ENCODE measurements at regions of chr10 and their contacts with region 1.

Region 1: GRCh38 chr10:110918643-110919363 is at the start of gene BBIP1:
- DNase-seq: peak; percentile 99
- H3K4me3 ChIP-seq: peak within 1 kb of the TSS; percentile 86 to 92 (median 88)
- H3K27ac ChIP-seq: peak within 1 kb of the TSS; percentile 98 to 100 (median 98)
- H3K4me1 ChIP-seq: peaks cover 10 to 43% (median 26%) of the 10 kb centered on the region in 4 donors
- H3K27me3 ChIP-seq: no peaks in the 10 kb centered on the region
- CTCF ChIP-seq: peak in 3 of 5 experiments; percentile 1 to 17 (median 15)
- EP300 ChIP-seq: peak; percentile 24
- POLR2A ChIP-seq: peak; percentile 88
- total RNA-seq, gene BBIP1: 9.6 to 44.9 (median 18.1) TPM

Region 2: DNA sequence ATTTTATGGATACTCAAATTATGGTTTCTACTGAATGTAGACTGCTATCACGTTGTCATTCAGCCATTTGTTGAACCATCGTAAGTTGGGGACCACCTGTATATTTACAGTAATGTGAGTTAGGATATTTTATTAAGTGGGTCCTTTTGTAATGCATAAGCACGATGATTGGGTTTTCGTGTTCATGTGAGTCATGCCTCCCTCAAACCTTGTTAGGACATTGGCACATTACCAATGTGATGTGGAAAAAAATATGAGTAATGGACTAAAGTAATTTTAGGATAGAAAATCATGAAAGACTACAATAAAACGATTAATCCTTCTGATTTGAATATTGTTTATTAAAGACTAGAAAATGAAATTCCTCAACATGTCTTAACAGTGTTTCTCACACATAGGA is 342.6 kb before region 1 on chr10:
- in situ Hi-C with region 1: loop called in 1 of 4 experiments (anchors 25 kb)
- intact Hi-C with region 1: no loop called
- DNase-seq: no peak
- H3K4me3 ChIP-seq: no peak overlapping the region
- H3K27ac ChIP-seq: no peak overlapping the region
- H3K4me1 ChIP-seq: peaks cover 0 to 21% (median 0%) of the 10 kb centered on the region in 4 donors
- H3K27me3 ChIP-seq: no peaks in the 10 kb centered on the region
- CTCF ChIP-seq: no peak
- EP300 ChIP-seq: no peak
- POLR2A ChIP-seq: no peak

Region 3: GRCh38 chr10:110610308-110610774 is 308.5 kb before region 1 on chr10:
- in situ Hi-C with region 1: loop called in 1 of 4 experiments (anchors 25 kb)
- intact Hi-C with region 1: no loop called
- DNase-seq: peak; percentile 45
- H3K4me3 ChIP-seq: no peak overlapping the region
- H3K27ac ChIP-seq: no peak overlapping the region
- H3K4me1 ChIP-seq: no peaks in the 10 kb centered on the region
- H3K27me3 ChIP-seq: no peaks in the 10 kb centered on the region
- CTCF ChIP-seq: peak; percentile 69 to 83 (median 78)
- EP300 ChIP-seq: no peak
- POLR2A ChIP-seq: no peak

Region 4: GRCh38 chr10:110834629-110835301 is 84.0 kb before region 1 on chr10:
- in situ Hi-C with region 1: no loop called
- intact Hi-C with region 1: no loop called
- DNase-seq: peak; percentile 21
- H3K4me3 ChIP-seq: no peak overlapping the region
- H3K27ac ChIP-seq: peak overlapping the region; percentile 80 to 91 (median 90)
- H3K4me1 ChIP-seq: peaks cover 38 to 58% (median 48%) of the 10 kb centered on the region in 4 donors
- H3K27me3 ChIP-seq: no peaks in the 10 kb centered on the region
- CTCF ChIP-seq: no peak
- EP300 ChIP-seq: no peak
- POLR2A ChIP-seq: no peak

Measured in transverse colon (tissue), 4 donors.